Left ventricle myocardium inferior (tissue), 1 donor: ENCODE measurements at regions of chr16 and their contacts with region 1.

Region 1: GRCh38 chr16:83878838-83879237 is 20.1 kb upstream of the MLYCD start:
- DNase-seq: no peak
- H3K4me3 ChIP-seq: no peak overlapping the region
- H3K27ac ChIP-seq: no peak overlapping the region
- H3K4me1 ChIP-seq: no peaks in the 10 kb centered on the region
- H3K27me3 ChIP-seq: peaks cover 35% of the 10 kb centered on the region
- CTCF ChIP-seq: peak; percentile 58

Region 2: DNA sequence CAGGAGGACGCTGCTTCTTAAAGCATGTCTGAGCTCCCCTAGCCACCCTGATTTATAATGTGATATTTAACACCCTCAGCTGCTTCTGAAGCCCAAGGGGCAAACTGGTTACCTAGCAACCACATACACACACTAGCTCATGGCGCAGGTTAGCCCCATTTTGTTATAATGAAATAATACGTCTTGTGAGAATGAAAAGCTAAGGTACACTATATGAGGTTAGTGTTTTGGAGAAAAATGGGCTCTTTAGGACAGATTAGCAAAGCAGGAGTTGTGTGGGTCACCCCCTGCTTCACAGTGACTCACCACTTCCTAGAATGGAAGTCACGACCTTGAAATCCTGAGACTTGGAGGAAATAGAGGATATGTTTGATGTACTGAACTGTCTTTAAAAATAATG is 475.9 kb before region 1 on chr16:
- intact Hi-C with region 1: no loop called
- DNase-seq: no peak
- H3K4me3 ChIP-seq: no peak overlapping the region
- H3K27ac ChIP-seq: no peak overlapping the region
- H3K4me1 ChIP-seq: no peaks in the 10 kb centered on the region
- H3K27me3 ChIP-seq: no peaks in the 10 kb centered on the region
- CTCF ChIP-seq: no peak

Region 3: GRCh38 chr16:83826146-83826913 is 52.5 kb before region 1 on chr16:
- intact Hi-C with region 1: loop called (anchors 10 kb)
- DNase-seq: peak; percentile 82
- H3K4me3 ChIP-seq: no peak overlapping the region
- H3K27ac ChIP-seq: no peak overlapping the region
- H3K4me1 ChIP-seq: no peaks in the 10 kb centered on the region
- H3K27me3 ChIP-seq: peaks cover 16% of the 10 kb centered on the region
- CTCF ChIP-seq: peak; percentile 96